ENCODE measurements at regions of chr7 and their contacts with region 1.

Region 1: GRCh38 chr7:75866489-75867389 is 12.1 kb upstream of the RHBDD2 start:
- DNase-seq: peak; percentile 54
- ATAC-seq: peak; percentile 87 to 91

Region 2: GRCh38 chr7:75795831-75796285 is 70.9 kb before region 1 on chr7:
- intact Hi-C with region 1: no loop called
- DNase-seq: peak; percentile 64
- ATAC-seq: peak; percentile 69 to 84

Region 3: DNA sequence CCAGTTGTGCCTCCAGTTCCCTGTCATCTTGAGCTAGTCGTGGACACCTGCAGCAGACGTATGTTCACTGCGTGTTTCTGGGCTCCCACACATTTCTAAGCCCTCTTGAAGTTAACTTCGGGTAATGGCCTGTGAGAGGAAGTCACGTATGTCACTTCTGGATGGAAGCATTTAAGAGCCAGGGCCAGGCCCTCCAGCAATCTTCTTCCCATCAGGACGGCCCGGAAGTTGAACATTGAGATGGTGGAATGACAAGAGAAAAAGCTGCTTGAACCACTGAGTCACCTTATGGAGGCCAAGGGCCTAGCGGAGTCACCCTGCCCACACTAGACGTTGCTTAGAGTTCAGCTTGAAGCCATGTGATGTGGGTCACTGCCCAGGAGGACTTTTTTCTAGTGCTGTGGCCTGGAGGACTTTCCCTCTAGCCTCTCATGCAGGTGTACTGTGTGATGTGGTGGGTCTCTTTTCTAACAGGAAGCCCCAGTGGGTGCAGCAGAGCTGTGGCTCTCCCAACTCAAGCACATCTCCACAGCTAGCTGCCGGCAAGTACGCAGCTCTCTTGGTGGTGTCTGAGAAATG is 61.7 kb after region 1 on chr7:
- intact Hi-C with region 1: no loop called
- DNase-seq: no peak
- ATAC-seq: no peak

Region 4: GRCh38 chr7:76020031-76020714 is 153.4 kb after region 1 on chr7:
- intact Hi-C with region 1: loop called (anchors 1 to 5 kb)
- DNase-seq: peak; percentile 79
- ATAC-seq: peak; percentile 56 to 79